Posterior cingulate gyrus (tissue), 11 donors: ENCODE measurements at regions of chr18 and their contacts with region 1.

Region 1: GRCh38 chr18:55753643-55754263 is 165.8 kb upstream of the TCF4 start:
- DNase-seq: no peak

Region 2: DNA sequence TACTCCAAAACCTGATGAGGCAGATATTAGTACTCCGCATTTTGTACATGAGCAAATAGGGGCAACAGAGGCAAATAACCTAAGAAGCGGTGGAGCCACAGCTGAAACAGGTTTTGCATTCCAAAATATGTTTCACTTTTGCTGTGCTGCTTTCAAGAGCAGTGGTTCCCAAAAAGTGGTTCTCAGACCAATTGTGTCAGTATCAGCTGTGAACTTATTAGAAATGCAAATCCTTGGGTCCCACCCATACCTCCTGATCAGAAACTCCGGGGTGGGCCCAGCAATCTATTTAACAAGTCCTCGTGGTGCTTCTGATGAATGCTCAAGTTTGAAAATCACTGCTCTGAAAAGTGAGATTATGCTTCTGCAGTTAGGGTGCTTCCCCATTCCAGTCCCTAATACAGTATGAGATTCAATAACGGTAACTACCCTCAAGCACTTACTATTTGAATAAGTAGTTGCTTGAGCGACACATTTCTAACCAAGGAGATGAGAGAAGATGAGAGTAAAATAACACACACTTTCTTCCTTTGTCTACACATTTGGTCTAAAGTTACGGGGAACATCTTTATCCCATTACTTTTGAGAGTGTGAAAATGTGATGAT is 147.9 kb before region 1 on chr18:
- intact Hi-C with region 1: loop called (anchors 5 kb)
- DNase-seq: no peak